Mammary epithelial cell (primary cell): ENCODE measurements at regions of chr9 and their contacts with region 1.

Region 1: DNA sequence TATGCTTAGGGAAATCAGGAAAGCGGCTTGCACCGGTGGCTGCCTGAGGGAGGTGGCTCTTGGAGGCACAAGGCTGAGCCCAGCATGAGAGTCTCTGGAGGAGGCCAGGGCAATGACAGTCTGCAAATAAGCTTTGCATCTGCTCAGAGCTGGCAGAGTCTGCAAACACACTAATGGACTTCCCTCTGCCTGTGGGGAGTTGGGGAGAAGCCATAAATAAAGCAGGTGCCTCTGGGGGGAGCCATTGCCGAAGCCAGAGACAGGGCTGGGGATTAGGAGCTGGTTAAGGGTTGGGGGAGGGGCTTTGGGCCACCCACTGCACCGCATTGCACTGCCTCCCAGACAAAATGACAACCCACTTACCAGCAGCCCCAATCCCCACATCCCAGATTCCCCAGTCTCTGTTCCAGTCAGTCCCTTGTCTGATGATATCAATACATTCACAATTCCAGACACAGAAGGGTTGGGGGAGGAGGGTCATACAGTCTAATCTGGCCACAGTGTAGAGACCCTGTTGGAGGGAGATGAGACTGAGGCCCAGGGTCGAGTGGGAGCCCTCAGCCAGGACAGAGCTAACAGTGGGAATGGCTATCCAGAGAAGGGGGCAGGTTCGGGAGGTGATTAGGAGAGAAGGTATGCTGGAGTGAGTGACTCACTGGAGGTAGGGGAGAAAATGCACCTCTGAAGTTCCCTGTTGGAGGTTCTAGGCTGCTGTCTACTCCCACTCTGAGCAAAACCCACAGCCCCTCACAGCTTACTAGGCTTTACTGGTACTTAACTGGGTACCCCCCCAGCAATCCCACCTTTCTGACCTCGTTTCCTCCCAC is 53.7 kb downstream of the PAX5 start:
- DNase-seq: peak; percentile 32
- H3K4me3 ChIP-seq: no peak overlapping the region
- H3K27ac ChIP-seq: no peak overlapping the region
- H3K4me1 ChIP-seq: peaks cover 19% of the 10 kb centered on the region
- H3K27me3 ChIP-seq: peaks cover 11% of the 10 kb centered on the region
- CTCF ChIP-seq: peak in 1 of 2 donors; percentile 32

Region 2: GRCh38 chr9:36862206-36863145 is 117.9 kb before region 1 on chr9:
- CTCF ChIA-PET with region 1: no interaction called
- dilution Hi-C with region 1: loop called (anchors 5 kb)
- in situ Hi-C with region 1: no loop called
- intact Hi-C with region 1: no loop called
- DNase-seq: peak; percentile 15
- H3K4me3 ChIP-seq: no peak overlapping the region
- H3K27ac ChIP-seq: no peak overlapping the region
- H3K4me1 ChIP-seq: no peaks in the 10 kb centered on the region
- H3K27me3 ChIP-seq: peaks cover 2% of the 10 kb centered on the region
- CTCF ChIP-seq: peak; percentile 40 to 66